Lower leg skin (tissue), 4 donors: ENCODE measurements at regions of chr2 and their contacts with region 1.

Region 1: GRCh38 chr2:14577843-14578242 is 54.7 kb upstream of the LRATD1 start:
- DNase-seq: peak in 1 of 2 donors; percentile 42
- H3K4me3 ChIP-seq: no peak overlapping the region
- CTCF ChIP-seq: no peak
- POLR2A ChIP-seq: no peak

Region 2: DNA sequence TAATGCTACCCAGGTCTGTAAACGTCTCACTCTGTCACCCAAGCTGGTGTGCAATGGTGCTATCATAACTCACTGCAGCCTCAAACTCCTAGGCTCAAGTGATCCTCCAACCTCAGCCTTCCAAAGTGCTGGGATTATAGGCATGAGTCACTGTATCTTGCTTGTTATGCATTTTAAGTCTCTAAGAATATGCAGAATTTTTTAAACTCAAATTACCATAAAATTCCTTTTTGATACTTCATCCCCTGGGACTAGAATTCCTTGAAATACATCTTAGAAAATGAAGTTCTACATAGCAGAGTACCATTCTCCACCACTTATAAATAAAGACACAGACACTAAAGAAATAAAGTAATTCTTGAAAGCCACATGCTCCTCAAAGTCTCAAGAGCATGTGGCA is 24.5 kb after region 1 on chr2:
- intact Hi-C with region 1: loop called (anchors 1 kb)
- DNase-seq: no peak
- H3K4me3 ChIP-seq: no peak overlapping the region
- CTCF ChIP-seq: no peak
- POLR2A ChIP-seq: no peak

Region 3: DNA sequence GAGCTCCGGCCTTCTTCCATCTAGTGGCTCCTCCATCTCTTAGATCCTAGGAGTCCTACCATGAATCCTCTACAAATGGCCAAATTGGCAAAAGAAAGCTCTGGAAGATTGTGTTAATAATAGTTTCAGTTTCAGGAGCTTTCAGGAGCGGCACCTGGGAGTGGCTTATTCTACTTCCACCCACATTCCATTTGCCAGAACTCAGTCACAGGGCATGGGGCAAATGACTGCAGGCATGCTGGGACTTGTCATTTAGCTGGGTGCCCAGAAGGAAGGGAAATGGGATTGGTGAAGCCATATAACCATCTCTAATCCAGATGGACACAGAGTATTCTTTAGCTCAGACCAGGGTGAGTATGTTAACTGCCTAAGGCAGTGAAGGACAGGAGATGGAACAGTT is 51.1 kb after region 1 on chr2:
- intact Hi-C with region 1: no loop called
- DNase-seq: peak; percentile 56 to 86
- H3K4me3 ChIP-seq: no peak overlapping the region
- CTCF ChIP-seq: no peak
- POLR2A ChIP-seq: no peak